Activated CD8-positive, alpha-beta T cell treated with anti-CD3 and anti-CD28 coated beads, Interleukin-2, amount 10 ng/mL, durations not matched to agents 7 days and 5 days (primary cell): ENCODE measurements at regions of chr4 and their contacts with region 1.

Region 1: DNA sequence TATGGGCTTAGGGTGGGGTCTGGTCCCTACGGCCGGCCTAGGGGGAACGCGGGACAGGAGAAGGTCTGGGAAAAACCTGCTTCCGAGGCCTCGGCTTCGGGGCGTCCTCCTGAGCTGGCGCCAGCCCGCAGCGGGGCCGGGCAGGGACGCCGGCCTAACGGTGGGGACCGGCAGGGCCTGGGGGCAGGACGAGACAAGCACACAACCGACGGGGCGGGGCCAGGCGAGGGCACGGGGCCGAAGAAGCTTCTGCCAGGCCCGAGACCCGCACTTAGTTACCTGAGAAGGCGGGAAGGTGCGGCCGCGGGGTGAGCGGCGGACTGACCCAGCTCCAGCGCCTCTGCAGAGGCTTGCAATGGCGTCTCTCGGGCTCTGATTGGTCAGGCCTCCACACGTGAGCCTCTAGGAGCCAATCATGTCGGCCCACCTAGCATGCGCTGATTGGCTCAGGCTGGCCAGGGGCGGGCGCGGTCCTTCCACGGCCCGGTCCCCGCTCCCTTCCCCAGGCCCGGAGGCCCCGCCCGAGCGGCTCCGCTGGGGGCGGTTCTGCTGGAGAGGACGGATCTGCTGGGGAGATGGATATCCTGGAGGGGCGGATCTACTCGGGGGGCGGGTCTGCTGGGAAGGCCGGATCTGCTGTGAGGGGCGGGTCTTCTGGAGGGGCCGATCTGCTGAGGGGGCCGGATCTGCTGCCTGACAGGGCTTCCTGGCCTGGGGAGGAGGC is 44.3 kb downstream of the CPLX1 start:
- DNase-seq: peak; percentile 99
- ATAC-seq: peak; percentile 95
- H3K4me3 Mint-ChIP-seq: peak overlapping the region; percentile 84
- H3K27ac Mint-ChIP-seq: peak overlapping the region; percentile 94
- H3K4me1 Mint-ChIP-seq: peaks cover 57% of the 10 kb centered on the region
- H3K27me3 Mint-ChIP-seq: peaks cover 15% of the 10 kb centered on the region

Region 2: GRCh38 chr4:793941-794621 is 12.4 kb after region 1 on chr4:
- CTCF ChIA-PET with region 1: no interaction called
- POLR2A ChIA-PET with region 1: interaction called, 19 read pairs
- DNase-seq: no peak
- ATAC-seq: no peak
- H3K4me3 Mint-ChIP-seq: no peak overlapping the region
- H3K27ac Mint-ChIP-seq: no peak overlapping the region
- H3K4me1 Mint-ChIP-seq: peaks cover 34% of the 10 kb centered on the region
- H3K27me3 Mint-ChIP-seq: peaks cover 40% of the 10 kb centered on the region

Region 3: GRCh38 chr4:808860-809570 is 27.4 kb after region 1 on chr4:
- CTCF ChIA-PET with region 1: no interaction called
- POLR2A ChIA-PET with region 1: no interaction called
- DNase-seq: no peak
- ATAC-seq: no peak
- H3K4me3 Mint-ChIP-seq: no peak overlapping the region
- H3K27ac Mint-ChIP-seq: no peak overlapping the region
- H3K4me1 Mint-ChIP-seq: no peaks in the 10 kb centered on the region
- H3K27me3 Mint-ChIP-seq: peaks cover 37% of the 10 kb centered on the region

Region 4: DNA sequence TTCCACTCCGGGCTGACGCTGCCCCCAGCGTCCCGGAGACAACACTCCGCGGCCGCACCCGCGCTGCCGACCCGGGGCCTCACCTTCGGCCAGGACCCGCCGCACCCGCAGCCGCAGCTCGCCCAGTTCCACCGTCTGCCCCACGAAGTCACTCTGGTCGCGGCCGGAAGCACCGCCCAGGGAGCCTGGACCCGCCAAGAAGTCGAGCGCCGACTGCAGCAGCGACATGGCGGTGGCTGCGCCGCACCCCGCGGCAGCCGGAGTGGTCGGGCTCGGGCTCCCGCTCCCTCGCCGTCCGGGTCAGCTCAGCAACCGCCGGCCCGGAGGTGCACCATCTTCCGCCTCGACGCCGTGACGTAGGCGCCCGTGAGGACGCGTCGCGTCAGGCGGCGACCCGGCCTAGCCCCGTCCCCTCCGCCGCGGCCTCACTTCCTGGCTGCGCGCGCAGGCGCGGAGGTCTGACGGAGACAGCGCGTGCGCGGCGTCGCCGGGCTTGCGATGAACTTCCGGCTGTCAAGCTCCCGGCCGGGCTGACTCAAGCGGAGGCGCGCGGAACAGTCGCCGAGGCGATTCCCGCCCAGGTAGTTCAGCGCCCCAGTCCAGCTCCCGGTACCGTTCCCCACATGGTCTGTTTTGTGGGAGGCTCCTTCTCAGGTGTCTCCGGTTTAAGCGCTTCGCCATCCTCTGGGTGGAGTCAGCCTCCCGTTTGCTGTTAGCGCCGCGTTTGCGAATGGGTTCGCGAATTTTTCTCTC is 150.5 kb after region 1 on chr4 and contains the starts of genes GAK and TMEM175:
- CTCF ChIA-PET with region 1: no interaction called
- POLR2A ChIA-PET with region 1: interaction called, 12 read pairs
- DNase-seq: peak; percentile 97
- ATAC-seq: peak; percentile 93
- H3K4me3 Mint-ChIP-seq: peak within 1 kb of the TSS; percentile 85
- H3K27ac Mint-ChIP-seq: peak within 1 kb of the TSS; percentile 92
- H3K4me1 Mint-ChIP-seq: peaks cover 49% of the 10 kb centered on the region
- H3K27me3 Mint-ChIP-seq: no peaks in the 10 kb centered on the region
- total RNA-seq, gene GAK: 155 to 163 TPM
- total RNA-seq, gene TMEM175: 27.2 to 30.1 TPM

Region 5: GRCh38 chr4:1167247-1167949 is 385.7 kb after region 1 on chr4:
- CTCF ChIA-PET with region 1: no interaction called
- POLR2A ChIA-PET with region 1: no interaction called
- DNase-seq: peak; percentile 95
- ATAC-seq: peak; percentile 91
- H3K4me3 Mint-ChIP-seq: peak overlapping the region; percentile 80
- H3K27ac Mint-ChIP-seq: peak overlapping the region; percentile 85
- H3K4me1 Mint-ChIP-seq: peaks cover 42% of the 10 kb centered on the region
- H3K27me3 Mint-ChIP-seq: peaks cover 20% of the 10 kb centered on the region